PC-3 (cell line): ENCODE measurements at regions of chr5 and their contacts with region 1.

Region 1: GRCh38 chr5:91787718-91788117 is 404.6 kb upstream of the ARRDC3 start:
- DNase-seq: peak; percentile 99
- ATAC-seq: peak; percentile 99
- H3K4me3 ChIP-seq: no peak overlapping the region
- H3K27ac ChIP-seq: peak overlapping the region; percentile 59
- H3K4me1 ChIP-seq: peaks cover 21% of the 10 kb centered on the region
- H3K27me3 ChIP-seq: no peaks in the 10 kb centered on the region; the same call in 1 of the 2 replicates
- CTCF ChIP-seq: no peak

Region 2: GRCh38 chr5:91486638-91487037 is 301.1 kb before region 1 on chr5:
- CTCF ChIA-PET with region 1: no interaction called
- POLR2A ChIA-PET with region 1: no interaction called
- intact Hi-C with region 1: no loop called
- DNase-seq: peak; percentile 78
- ATAC-seq: peak; percentile 74
- H3K4me3 ChIP-seq: no peak overlapping the region
- H3K27ac ChIP-seq: peak overlapping the region; percentile 21; the same call in 1 of the 2 replicates
- H3K4me1 ChIP-seq: peaks cover 26% of the 10 kb centered on the region
- H3K27me3 ChIP-seq: no peaks in the 10 kb centered on the region
- CTCF ChIP-seq: no peak

Region 3: GRCh38 chr5:91848453-91848852 is 60.7 kb after region 1 on chr5:
- CTCF ChIA-PET with region 1: no interaction called
- POLR2A ChIA-PET with region 1: no interaction called
- intact Hi-C with region 1: loop called (anchors 5 kb)
- DNase-seq: peak; percentile 96
- ATAC-seq: peak; percentile 97
- H3K4me3 ChIP-seq: no peak overlapping the region
- H3K27ac ChIP-seq: peak overlapping the region; percentile 39
- H3K4me1 ChIP-seq: peaks cover 26% of the 10 kb centered on the region
- H3K27me3 ChIP-seq: no peaks in the 10 kb centered on the region
- CTCF ChIP-seq: no peak

Region 4: GRCh38 chr5:91928754-91929521 is 141.2 kb after region 1 on chr5:
- CTCF ChIA-PET with region 1: no interaction called
- POLR2A ChIA-PET with region 1: no interaction called
- intact Hi-C with region 1: loop called (anchors 5 kb)
- DNase-seq: peak; percentile 67
- ATAC-seq: peak; percentile 72
- H3K4me3 ChIP-seq: no peak overlapping the region
- H3K27ac ChIP-seq: no peak overlapping the region
- H3K4me1 ChIP-seq: no peaks in the 10 kb centered on the region
- H3K27me3 ChIP-seq: peaks cover 4% of the 10 kb centered on the region; the same call in 1 of the 2 replicates
- CTCF ChIP-seq: peak; percentile 86

Region 5: DNA sequence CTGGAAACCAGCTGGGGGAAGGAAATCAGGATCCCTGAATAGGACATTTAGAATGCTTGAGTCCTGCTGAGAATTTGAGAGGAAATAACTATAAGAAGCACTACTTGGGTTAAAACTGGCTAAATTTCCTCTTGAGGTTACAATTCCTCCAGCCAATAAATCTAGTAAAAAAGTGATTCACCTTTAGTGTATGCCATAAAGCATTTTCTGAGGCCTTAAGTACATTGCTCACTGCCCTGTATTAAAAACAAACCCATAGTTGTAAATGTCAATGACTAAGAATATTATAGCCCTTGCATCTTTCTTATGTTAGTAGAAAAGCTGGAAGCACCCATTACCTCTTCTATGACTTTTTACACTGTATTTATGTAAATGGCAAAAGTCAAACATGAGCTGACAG is 230.1 kb after region 1 on chr5:
- CTCF ChIA-PET with region 1: no interaction called
- POLR2A ChIA-PET with region 1: no interaction called
- intact Hi-C with region 1: loop called (anchors 1 kb)
- DNase-seq: peak; percentile 95
- ATAC-seq: peak; percentile 98
- H3K4me3 ChIP-seq: no peak overlapping the region
- H3K27ac ChIP-seq: peak overlapping the region; percentile 55
- H3K4me1 ChIP-seq: peaks cover 32% of the 10 kb centered on the region
- H3K27me3 ChIP-seq: no peaks in the 10 kb centered on the region
- CTCF ChIP-seq: no peak